ENCODE measurements at regions of chr15 and their contacts with region 1.

Region 1: DNA sequence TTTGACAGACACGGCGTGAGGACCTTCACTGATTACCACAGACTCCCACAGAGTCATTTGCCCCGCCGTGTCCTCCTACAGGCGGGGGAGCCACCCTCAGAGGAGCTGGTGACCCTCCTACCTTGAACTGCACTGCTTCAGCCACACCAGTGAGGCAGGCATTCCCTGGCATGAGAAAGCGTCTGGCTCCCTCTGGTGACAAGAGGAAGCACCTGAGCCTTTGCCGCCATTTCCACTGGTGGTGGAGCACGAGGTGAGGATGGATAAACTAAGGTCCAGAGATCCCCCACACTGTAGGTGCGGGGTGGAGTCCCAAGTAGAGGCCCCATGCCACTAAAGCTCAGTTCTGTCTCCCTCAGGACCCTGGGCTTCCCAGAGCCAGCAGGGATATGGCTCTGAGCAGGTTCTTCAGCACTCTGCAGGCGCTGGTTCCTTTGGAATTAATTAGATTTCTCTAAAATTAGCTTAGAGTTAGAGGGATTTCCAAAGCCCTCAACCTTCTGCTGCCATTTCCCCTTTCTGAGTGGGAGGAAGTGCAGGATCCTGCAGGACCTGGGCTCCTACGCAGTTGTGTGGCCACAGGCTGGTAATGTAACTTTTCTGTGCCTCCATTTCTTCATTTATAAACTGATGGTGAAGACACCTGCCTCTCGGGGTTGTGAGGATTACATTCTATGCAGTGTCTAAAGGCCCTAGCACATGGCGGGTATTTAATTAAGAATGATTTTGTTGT is 224.0 kb downstream of the SLCO3A1 start:
- DNase-seq: peak; percentile 78 to 84
- ATAC-seq: peak; percentile 81 to 90
- H3K4me3 ChIP-seq: no peak overlapping the region
- H3K27ac ChIP-seq: no peak overlapping the region
- H3K4me1 ChIP-seq: peaks cover 6% of the 10 kb centered on the region; the same call in 2 of the 3 replicates
- CTCF ChIP-seq: peak; percentile 84
- EP300 ChIP-seq: no peak
- POLR2A ChIP-seq: no peak
- RAD21 ChIP-seq: peak; percentile 96 to 98

Region 2: DNA sequence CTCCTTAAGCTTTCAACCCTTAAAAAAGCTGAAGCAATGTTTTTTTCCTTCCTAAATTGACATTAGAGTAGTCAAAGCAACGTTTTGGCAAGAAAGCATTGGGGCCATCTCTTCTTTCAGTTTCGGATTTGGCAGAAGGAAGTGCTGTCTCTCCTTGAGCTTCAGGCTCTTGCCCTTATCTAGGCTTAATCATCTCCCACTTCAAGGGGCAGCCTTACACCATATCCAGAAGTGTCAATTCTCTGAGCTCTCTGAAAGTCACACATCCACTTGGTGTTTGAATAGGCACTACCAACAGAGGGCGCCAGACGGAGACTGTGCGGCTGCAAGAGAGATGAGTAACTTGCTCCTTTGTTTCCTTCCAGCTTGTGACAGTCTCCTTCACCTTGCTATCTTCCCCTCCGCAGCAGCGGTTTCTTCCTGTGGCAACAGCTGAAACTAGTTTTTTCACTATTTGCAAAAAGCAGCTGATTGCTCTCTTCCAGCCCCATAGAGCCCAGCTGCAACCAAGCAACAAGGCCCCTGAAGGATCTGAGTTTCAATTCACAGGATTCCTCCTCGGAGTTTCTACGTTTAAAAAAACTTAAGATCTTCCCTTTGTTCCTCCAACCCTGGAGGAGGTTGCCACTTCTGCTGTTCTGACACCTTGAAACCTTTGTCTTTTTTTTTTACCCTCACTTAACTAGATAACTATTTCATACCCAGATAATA is 371.0 kb before region 1 on chr15:
- CTCF ChIA-PET with region 1: interaction called, 54 read pairs
- POLR2A ChIA-PET with region 1: no interaction called
- DNase-seq: peak; percentile 63 to 79
- ATAC-seq: peak; percentile 75 to 92; a peak in 5 of 6 replicates
- H3K4me3 ChIP-seq: no peak overlapping the region
- H3K27ac ChIP-seq: no peak overlapping the region
- H3K4me1 ChIP-seq: no peaks in the 10 kb centered on the region
- CTCF ChIP-seq: peak; percentile 59
- EP300 ChIP-seq: no peak
- POLR2A ChIP-seq: no peak
- RAD21 ChIP-seq: peak; percentile 56 to 74; a peak in 4 of 5 replicates

Region 3: GRCh38 chr15:91947683-91948608 is 129.6 kb before region 1 on chr15:
- CTCF ChIA-PET with region 1: interaction called, 18 read pairs
- POLR2A ChIA-PET with region 1: no interaction called
- DNase-seq: peak; percentile 55 to 67
- ATAC-seq: peak; percentile 73 to 81
- H3K4me3 ChIP-seq: no peak overlapping the region
- H3K27ac ChIP-seq: peak overlapping the region; percentile 6 to 70; a peak in 3 of 6 replicates
- H3K4me1 ChIP-seq: peaks cover 46% of the 10 kb centered on the region
- CTCF ChIP-seq: no peak
- EP300 ChIP-seq: no peak
- POLR2A ChIP-seq: no peak
- RAD21 ChIP-seq: 0 out of 5 replicates have a peak, but pooled peaks of 1 of the 2 experiments have one; percentile 7

Region 4: GRCh38 chr15:92012368-92012629 is 65.2 kb before region 1 on chr15:
- CTCF ChIA-PET with region 1: no interaction called
- POLR2A ChIA-PET with region 1: no interaction called
- DNase-seq: no peak
- ATAC-seq: no peak
- H3K4me3 ChIP-seq: no peak overlapping the region
- H3K27ac ChIP-seq: no peak overlapping the region
- H3K4me1 ChIP-seq: peaks cover 13% of the 10 kb centered on the region
- CTCF ChIP-seq: no peak
- EP300 ChIP-seq: no peak
- POLR2A ChIP-seq: no peak
- RAD21 ChIP-seq: no peak

Region 5: DNA sequence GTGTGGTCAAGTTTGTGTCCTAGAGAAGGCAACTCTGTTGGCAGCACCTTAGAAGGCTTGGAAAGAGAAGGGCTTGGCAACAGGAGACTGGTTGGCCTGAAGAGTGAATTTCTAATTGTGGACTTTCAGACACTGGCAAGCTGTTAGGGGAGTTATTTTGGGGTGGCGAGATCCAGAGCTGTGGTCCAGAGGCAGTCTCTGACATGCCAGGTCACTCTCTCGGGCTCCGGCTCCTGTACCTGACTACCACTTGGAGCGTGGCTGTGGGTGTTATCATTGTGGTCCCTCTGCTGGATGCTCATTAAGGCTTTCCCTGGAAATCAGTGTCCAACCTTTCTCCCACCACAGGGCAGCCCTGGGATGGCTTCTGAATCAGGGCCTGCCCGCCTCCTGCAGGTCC is 15.0 kb before region 1 on chr15:
- CTCF ChIA-PET with region 1: interaction called, 20 read pairs
- POLR2A ChIA-PET with region 1: no interaction called
- DNase-seq: no peak
- ATAC-seq: peak; percentile 39 to 44; a peak in 4 of 6 replicates
- H3K4me3 ChIP-seq: no peak overlapping the region
- H3K27ac ChIP-seq: no peak overlapping the region
- H3K4me1 ChIP-seq: no peaks in the 10 kb centered on the region
- CTCF ChIP-seq: no peak
- EP300 ChIP-seq: no peak
- POLR2A ChIP-seq: no peak
- RAD21 ChIP-seq: no peak

Measured in A549 (cell line).